ENCODE measurements at regions of chr20 and their contacts with region 1.

Region 1: GRCh38 chr20:32031007-32031958 is 20.8 kb upstream of the HCK start:
- DNase-seq: peak; percentile 70 to 91 (median 81)
- ATAC-seq: peak; percentile 94 to 97 (median 96)
- H3K4me3 ChIP-seq: peak overlapping the region in 2 of 4 donors; percentile 6 to 36
- H3K27ac ChIP-seq: no peak overlapping the region
- H3K4me1 ChIP-seq: peaks cover 0 to 4% (median 0%) of the 10 kb centered on the region in 3 donors
- H3K27me3 ChIP-seq: peaks cover 0 to 7% (median 0%) of the 10 kb centered on the region in 4 donors
- CTCF ChIP-seq: peak; percentile 81 to 97 (median 94)

Region 2: DNA sequence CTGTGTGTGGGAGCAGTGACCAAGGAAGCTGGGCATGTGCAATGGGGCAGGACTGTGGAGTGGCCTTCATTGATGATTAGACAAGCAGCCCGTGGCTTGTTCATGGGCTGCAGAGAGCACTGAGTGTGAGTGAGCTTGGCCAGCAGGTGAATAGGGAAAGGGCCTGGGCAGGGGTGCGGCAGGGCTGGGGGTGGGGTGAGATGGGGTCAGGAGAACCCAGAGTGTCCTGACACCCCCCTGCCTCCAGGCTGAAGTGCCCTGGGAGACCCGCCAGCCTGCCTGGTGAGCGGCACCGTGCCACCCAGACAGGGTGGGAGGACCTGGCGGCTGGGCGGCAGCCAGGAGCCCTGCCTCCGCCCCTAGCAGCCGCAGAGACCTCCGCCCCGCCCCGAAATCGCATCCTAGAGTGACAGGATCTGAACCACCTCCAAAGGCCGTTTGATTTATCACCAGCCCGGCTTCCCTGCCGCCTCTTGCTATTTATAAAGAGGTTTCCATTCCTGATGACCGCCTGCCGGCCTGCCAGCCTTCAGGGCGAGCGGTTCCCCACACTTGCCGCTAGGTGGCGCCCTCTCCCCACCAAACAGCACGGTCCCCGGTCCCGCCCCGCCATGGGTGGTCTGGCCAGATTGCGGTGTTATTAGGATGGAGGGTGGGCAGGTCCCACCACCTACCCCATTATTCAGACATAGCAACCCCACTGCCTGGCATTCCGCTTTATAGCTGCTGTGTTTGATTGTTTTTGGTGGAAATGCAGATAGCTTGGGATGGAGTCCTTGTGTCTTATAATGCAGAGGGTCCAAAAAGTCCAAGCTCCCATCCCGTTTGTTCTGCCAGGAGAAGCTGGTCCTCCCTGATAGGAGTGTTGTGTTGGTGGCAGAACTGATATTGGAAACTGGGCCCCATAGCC is 208.6 kb before region 1 on chr20:
- intact Hi-C with region 1: loop called in 1 of 3 experiments (anchors 5 kb)
- DNase-seq: peak; percentile 70 to 94 (median 92)
- ATAC-seq: peak; percentile 77 to 88 (median 82)
- H3K4me3 ChIP-seq: peak overlapping the region in 2 of 4 donors; percentile 19 to 28
- H3K27ac ChIP-seq: peak overlapping the region in 3 of 4 donors; percentile 13 to 81 (median 78)
- H3K4me1 ChIP-seq: peaks cover 0 to 11% (median 3%) of the 10 kb centered on the region in 3 donors
- H3K27me3 ChIP-seq: no peaks in the 10 kb centered on the region
- CTCF ChIP-seq: peak; percentile 99 to 100 (median 100)

Region 3: DNA sequence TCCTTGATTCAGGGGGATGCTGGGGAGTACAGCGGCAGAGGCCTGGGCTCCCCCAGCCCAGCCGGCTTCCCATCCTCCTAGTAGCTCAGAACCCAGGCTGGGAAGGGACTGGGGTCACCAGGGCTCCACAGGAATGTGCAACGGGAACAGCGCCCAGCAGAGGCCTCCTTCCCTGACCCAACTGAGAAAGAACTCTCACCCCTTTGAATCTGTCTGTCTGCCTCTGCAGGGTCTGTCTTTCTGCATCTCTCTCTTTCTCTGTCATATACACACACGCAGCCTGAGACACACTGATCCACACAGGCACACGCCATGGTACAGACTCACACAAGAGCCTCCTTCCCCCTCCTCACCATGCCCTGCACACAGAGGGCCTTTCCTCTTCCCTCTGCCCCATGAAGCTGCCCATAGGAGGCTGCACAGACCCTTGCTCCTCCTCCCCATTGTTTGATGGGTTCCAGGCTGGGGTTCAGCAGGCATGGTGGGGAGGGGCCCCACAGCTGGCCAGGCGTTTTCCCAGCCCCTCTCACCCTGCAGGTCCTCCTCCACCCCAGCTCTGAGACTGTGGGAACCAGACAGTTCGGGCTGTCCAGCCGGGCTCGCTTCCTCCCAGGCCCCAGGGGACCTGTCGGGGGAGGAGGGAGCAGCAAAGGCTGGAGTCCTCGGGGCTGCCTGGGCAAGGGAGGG is 188.7 kb before region 1 on chr20:
- intact Hi-C with region 1: loop called in 1 of 3 experiments (anchors 10 kb)
- DNase-seq: peak in 1 of 6 donors; percentile 53
- ATAC-seq: peak in 1 of 4 donors; percentile 29
- H3K4me3 ChIP-seq: no peak overlapping the region
- H3K27ac ChIP-seq: no peak overlapping the region
- H3K4me1 ChIP-seq: no peaks in the 10 kb centered on the region
- H3K27me3 ChIP-seq: no peaks in the 10 kb centered on the region
- CTCF ChIP-seq: no peak

Region 4: DNA sequence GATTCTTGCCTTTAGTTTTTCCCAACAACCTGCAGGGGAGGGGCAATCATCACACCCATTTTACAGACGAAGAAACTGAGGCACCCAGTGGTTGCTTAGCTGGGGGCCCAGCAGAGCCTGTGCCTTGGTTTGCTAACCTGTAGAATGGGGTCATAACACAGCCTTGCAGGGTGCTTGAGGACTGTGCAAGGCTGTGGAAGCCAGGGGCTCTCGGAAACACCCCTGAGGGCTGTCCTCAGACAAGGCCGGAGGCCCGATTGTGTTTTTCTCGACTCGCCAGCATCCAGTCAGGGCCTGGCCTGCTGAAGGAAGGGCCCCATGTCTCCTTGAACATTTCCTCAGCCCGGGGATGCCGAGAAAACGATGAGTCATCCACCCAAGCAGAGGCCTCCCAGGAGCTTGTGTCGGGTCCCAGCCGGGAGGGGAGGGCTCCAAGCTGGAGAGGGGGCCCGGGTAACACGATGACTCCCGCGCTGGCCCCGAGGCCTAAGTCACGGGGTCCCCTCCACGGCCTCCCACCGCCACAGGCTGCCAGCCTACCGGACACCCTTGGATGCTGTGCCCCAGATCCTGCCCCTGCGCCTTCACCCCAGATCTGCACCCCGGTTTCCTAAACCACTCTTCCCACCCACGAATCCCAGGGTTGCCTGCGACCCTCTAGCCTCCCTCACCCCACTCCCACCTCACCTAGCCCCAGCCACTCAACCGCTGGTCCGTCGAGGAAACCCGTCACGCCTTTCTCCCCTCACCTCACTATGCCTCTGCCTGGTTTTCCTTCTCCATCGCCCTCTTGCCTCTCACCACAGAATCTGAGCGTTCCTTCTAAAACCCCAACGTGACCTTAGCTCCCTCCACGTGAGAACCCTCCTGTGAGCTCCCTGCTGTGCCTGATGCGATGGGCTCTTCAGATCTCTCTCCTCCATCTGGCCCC is 543.3 kb after region 1 on chr20:
- intact Hi-C with region 1: no loop called
- DNase-seq: no peak
- ATAC-seq: peak in 3 of 4 donors; percentile 40 to 74 (median 69)
- H3K4me3 ChIP-seq: no peak overlapping the region
- H3K27ac ChIP-seq: no peak overlapping the region
- H3K4me1 ChIP-seq: no peaks in the 10 kb centered on the region
- H3K27me3 ChIP-seq: no peaks in the 10 kb centered on the region
- CTCF ChIP-seq: no peak

Measured in pancreas (tissue), 10 donors.